Activated CD4-positive, alpha-beta T cell treated with anti-CD3 and anti-CD28 coated beads, Interleukin-2, amount 10 ng/mL, durations not matched to agents 7 days and 5 days (primary cell): ENCODE measurements at regions of chr20 and their contacts with region 1.

Region 1: GRCh38 chr20:34312544-34313217 is 9.5 kb upstream of the AHCY start:
- DNase-seq: peak; percentile 91
- H3K4me3 Mint-ChIP-seq: peak overlapping the region; percentile 17
- H3K27ac Mint-ChIP-seq: no peak overlapping the region
- H3K4me1 Mint-ChIP-seq: peaks cover 17% of the 10 kb centered on the region
- H3K27me3 Mint-ChIP-seq: peaks cover 24% of the 10 kb centered on the region

Region 2: GRCh38 chr20:33666293-33667244 is 646.1 kb before region 1 on chr20 and contains the start of gene ACTL10:
- CTCF ChIA-PET with region 1: no interaction called
- POLR2A ChIA-PET with region 1: no interaction called
- DNase-seq: peak; percentile 78
- H3K4me3 Mint-ChIP-seq: peak within 1 kb of the TSS; percentile 86
- H3K27ac Mint-ChIP-seq: peak within 1 kb of the TSS; percentile 97
- H3K4me1 Mint-ChIP-seq: peaks cover 59% of the 10 kb centered on the region
- H3K27me3 Mint-ChIP-seq: no peaks in the 10 kb centered on the region
- total RNA-seq, gene ACTL10: 2.4 to 4.1 TPM

Region 3: GRCh38 chr20:34324541-34324940 is 11.9 kb after region 1 on chr20:
- CTCF ChIA-PET with region 1: interaction called, 11 read pairs
- POLR2A ChIA-PET with region 1: no interaction called
- DNase-seq: no peak
- H3K4me3 Mint-ChIP-seq: no peak overlapping the region
- H3K27ac Mint-ChIP-seq: no peak overlapping the region
- H3K4me1 Mint-ChIP-seq: no peaks in the 10 kb centered on the region
- H3K27me3 Mint-ChIP-seq: peaks cover 16% of the 10 kb centered on the region

Region 4: GRCh38 chr20:34415079-34415478 is 102.4 kb after region 1 on chr20:
- CTCF ChIA-PET with region 1: interaction called, 10 read pairs
- POLR2A ChIA-PET with region 1: no interaction called
- DNase-seq: no peak
- H3K4me3 Mint-ChIP-seq: no peak overlapping the region
- H3K27ac Mint-ChIP-seq: peak overlapping the region; percentile 54
- H3K4me1 Mint-ChIP-seq: peaks cover 24% of the 10 kb centered on the region
- H3K27me3 Mint-ChIP-seq: no peaks in the 10 kb centered on the region

Region 5: GRCh38 chr20:34473262-34473883 is 160.7 kb after region 1 on chr20:
- CTCF ChIA-PET with region 1: interaction called, 11 read pairs
- POLR2A ChIA-PET with region 1: no interaction called
- DNase-seq: peak; percentile 47
- H3K4me3 Mint-ChIP-seq: no peak overlapping the region
- H3K27ac Mint-ChIP-seq: no peak overlapping the region
- H3K4me1 Mint-ChIP-seq: peaks cover 11% of the 10 kb centered on the region
- H3K27me3 Mint-ChIP-seq: no peaks in the 10 kb centered on the region

Region 6: GRCh38 chr20:34522969-34523871 is 210.5 kb after region 1 on chr20:
- CTCF ChIA-PET with region 1: interaction called, 36 read pairs
- POLR2A ChIA-PET with region 1: interaction called, 3 read pairs
- DNase-seq: peak; percentile 56
- H3K4me3 Mint-ChIP-seq: no peak overlapping the region
- H3K27ac Mint-ChIP-seq: no peak overlapping the region
- H3K4me1 Mint-ChIP-seq: peaks cover 19% of the 10 kb centered on the region
- H3K27me3 Mint-ChIP-seq: no peaks in the 10 kb centered on the region

Region 7: GRCh38 chr20:34704177-34705007 is 391.7 kb after region 1 on chr20 and contains the start of gene TP53INP2:
- CTCF ChIA-PET with region 1: interaction called, 14 read pairs
- POLR2A ChIA-PET with region 1: no interaction called
- DNase-seq: peak; percentile 92
- H3K4me3 Mint-ChIP-seq: peak within 1 kb of the TSS; percentile 90
- H3K27ac Mint-ChIP-seq: peak within 1 kb of the TSS; percentile 93
- H3K4me1 Mint-ChIP-seq: peaks cover 31% of the 10 kb centered on the region
- H3K27me3 Mint-ChIP-seq: peaks cover 7% of the 10 kb centered on the region
- total RNA-seq, gene TP53INP2: 1.3 to 2.6 TPM